ENCODE measurements at regions of chr20 and their contacts with region 1.

Region 1: GRCh38 chr20:36754656-36755222 is 8.8 kb upstream of the NDRG3 start:
- DNase-seq: peak; percentile 26
- H3K4me3 Mint-ChIP-seq: no peak overlapping the region
- H3K27ac Mint-ChIP-seq: peak overlapping the region; percentile 40
- H3K4me1 Mint-ChIP-seq: peaks cover 6% of the 10 kb centered on the region
- H3K27me3 Mint-ChIP-seq: no peaks in the 10 kb centered on the region

Region 2: GRCh38 chr20:36550797-36551299 is 203.9 kb before region 1 on chr20:
- intact Hi-C with region 1: loop called (anchors 1 kb)
- DNase-seq: no peak
- H3K4me3 Mint-ChIP-seq: no peak overlapping the region
- H3K27ac Mint-ChIP-seq: no peak overlapping the region
- H3K4me1 Mint-ChIP-seq: no peaks in the 10 kb centered on the region
- H3K27me3 Mint-ChIP-seq: no peaks in the 10 kb centered on the region

Region 3: GRCh38 chr20:36613974-36614373 is 140.8 kb before region 1 on chr20:
- intact Hi-C with region 1: loop called (anchors 1 kb)
- DNase-seq: no peak
- H3K4me3 Mint-ChIP-seq: no peak overlapping the region
- H3K27ac Mint-ChIP-seq: peak overlapping the region; percentile 52
- H3K4me1 Mint-ChIP-seq: peaks cover 15% of the 10 kb centered on the region
- H3K27me3 Mint-ChIP-seq: no peaks in the 10 kb centered on the region

Region 4: GRCh38 chr20:36700438-36700837 is 54.3 kb before region 1 on chr20:
- intact Hi-C with region 1: no loop called
- DNase-seq: no peak
- H3K4me3 Mint-ChIP-seq: no peak overlapping the region
- H3K27ac Mint-ChIP-seq: no peak overlapping the region
- H3K4me1 Mint-ChIP-seq: no peaks in the 10 kb centered on the region
- H3K27me3 Mint-ChIP-seq: no peaks in the 10 kb centered on the region

Region 5: DNA sequence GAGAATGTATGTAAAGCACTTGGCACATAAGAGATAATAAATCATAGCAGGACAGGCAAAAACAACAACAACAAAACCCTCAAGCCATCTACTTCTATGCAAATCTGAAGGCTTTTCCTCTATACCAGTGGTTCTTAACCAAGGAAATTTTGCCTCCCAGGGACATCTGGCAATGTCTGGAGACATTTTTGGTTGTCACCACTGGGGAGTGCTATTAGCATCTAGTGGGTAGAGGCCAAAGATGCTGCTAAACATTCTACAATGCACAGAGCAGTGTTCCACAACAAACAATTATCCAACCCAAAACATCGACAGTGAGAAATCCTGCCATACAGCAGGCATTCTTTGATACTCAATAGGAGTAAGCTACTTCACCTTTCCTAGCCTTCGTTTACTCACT is 37.1 kb before region 1 on chr20:
- intact Hi-C with region 1: loop called (anchors 2 kb)
- DNase-seq: no peak
- H3K4me3 Mint-ChIP-seq: no peak overlapping the region
- H3K27ac Mint-ChIP-seq: no peak overlapping the region
- H3K4me1 Mint-ChIP-seq: peaks cover 14% of the 10 kb centered on the region
- H3K27me3 Mint-ChIP-seq: peaks cover 1% of the 10 kb centered on the region

Region 6: DNA sequence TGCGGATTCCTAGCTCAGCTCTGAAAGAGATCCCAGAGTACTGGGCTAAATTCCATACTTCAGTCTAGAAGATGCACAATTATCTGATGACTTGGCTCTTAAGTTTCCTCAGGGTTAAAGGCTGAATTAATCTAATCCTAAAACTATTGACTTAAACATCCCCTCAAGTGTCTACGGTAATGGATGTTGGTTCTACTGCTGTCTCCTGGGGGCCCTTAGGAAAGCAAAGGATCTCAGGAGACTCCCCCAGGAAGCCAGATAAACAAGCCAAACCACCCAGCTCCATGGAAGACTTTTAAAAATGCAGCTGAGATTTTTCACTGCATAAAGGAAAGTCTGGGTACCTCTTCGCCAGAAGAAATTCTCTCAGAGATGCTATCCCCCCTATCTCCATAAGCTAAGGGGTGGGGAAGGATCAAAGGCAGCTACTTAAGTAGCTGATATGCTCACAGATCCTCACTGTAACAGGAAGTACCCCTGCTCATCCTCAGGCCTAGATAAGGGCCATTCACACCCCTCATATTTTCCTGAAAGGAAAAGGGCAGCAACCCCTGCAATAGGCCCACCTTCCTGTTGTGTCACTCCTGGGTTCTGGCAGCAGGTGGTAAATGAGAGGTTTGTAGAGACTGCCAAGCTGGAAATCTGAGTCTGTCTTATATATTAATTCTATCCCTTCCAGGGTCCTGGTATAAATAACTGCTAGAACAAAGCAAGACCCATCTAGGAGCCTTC is 18.1 kb before region 1 on chr20:
- intact Hi-C with region 1: no loop called
- DNase-seq: no peak
- H3K4me3 Mint-ChIP-seq: no peak overlapping the region
- H3K27ac Mint-ChIP-seq: no peak overlapping the region
- H3K4me1 Mint-ChIP-seq: peaks cover 23% of the 10 kb centered on the region
- H3K27me3 Mint-ChIP-seq: no peaks in the 10 kb centered on the region

Measured in activated T-helper 1 cell treated with anti-CD3 and anti-CD28 coated beads, Interleukin-12 subunit alpha, Interleukin-12 subunit beta, Interleukin-2, Interleukin-4 antibody, amounts not matched to agents 30 ng/mL and 10 ng/mL and 1 ng/mL, durations not matched to agents 14 hours and 24 hours and 36 hours (primary cell).